Aorta (tissue), 5 donors: ENCODE measurements at regions of chr16 and their contacts with region 1.

Region 1: DNA sequence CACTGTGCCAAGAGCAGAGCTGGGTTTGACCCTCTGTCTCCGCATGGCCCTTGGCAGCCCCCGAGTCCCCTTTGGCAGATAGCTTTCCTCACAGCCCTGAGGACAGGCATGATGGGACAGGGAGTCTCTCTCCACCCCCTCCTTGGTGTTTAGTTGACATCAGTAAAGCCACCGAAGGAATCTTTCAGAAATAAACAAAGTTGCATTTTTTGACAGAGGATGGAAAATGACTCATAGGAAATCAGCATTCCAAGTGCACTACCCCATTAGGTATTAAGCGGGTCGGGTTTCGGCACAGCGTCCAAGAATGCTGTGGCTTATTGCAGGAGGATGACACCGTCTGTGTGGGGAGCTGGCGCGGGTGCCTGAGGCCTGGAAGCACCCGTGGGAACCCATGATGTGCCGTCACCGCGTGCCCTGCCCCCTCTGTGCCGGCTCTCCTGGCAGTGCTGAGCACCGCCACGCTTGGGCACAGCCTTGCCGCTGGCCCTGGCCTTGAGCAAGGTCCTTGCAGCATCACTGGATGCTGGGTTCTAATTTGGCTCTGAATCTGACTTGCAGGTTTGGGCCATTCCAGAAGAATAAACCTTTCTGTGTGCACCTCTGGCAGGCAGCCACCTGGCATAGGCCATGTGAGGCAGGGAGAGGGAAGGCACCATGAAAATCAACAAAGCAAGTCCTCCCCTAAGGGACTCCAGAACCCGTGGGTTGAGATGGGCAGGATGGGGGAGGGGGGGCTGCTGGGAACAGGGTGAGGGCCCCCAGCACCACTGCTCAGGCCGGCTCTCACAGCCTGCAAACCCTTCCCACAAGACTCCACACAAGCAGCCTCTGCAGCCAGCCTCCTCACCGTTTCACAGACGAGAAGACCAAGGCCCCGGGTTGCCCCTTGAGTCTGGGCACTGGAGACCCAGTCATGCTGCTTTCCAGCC is 50.5 kb upstream of the ZNF469 start:
- DNase-seq: peak; percentile 92
- ATAC-seq: peak; percentile 68
- H3K4me3 ChIP-seq: no peak overlapping the region
- H3K27ac ChIP-seq: no peak overlapping the region
- H3K4me1 ChIP-seq: no peaks in the 10 kb centered on the region
- H3K27me3 ChIP-seq: no peaks in the 10 kb centered on the region

Region 2: DNA sequence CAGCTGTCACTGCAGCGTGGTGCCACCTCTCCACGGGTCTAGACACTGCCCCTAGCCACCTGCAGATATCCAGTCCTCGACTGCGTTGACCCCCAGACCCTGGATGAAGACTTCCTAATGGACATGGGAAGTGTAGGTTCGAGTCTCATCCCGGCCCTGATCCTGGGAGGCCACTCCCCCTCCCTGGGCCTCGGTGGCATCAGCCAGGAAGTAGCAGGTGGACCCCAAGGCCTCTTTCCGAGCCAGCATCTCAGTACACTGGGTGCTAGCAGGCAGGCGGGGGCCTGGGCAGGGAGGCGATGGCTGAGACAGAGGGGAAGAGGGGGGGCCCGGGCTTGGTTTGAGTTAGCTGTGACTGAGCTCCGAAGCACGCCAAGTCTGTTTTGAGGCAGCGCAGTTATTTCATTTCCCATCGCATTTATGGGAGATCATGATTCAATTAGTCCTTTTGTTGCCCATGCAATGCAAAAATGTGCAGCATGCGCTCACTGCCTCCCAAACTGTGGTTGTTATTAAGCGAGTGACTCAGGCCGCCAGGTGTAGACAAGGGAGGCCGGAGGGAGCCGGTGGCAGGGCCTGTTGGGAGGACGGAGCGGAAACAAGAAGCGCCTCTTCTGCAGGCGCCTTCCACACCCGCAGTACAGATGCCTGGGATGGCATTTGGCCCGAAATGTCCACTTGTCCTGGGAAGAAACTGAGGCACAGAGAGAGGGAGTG is 25.2 kb after region 1 on chr16:
- intact Hi-C with region 1: no loop called
- DNase-seq: peak; percentile 24 to 59
- ATAC-seq: no peak
- H3K4me3 ChIP-seq: no peak overlapping the region
- H3K27ac ChIP-seq: no peak overlapping the region
- H3K4me1 ChIP-seq: no peaks in the 10 kb centered on the region
- H3K27me3 ChIP-seq: no peaks in the 10 kb centered on the region

Region 3: GRCh38 chr16:88383401-88384221 is 51.4 kb after region 1 on chr16:
- intact Hi-C with region 1: loop called in 1 of 2 experiments (anchors 5 kb)
- DNase-seq: peak; percentile 62 to 85
- ATAC-seq: no peak
- H3K4me3 ChIP-seq: peak overlapping the region; percentile 23 to 24
- H3K27ac ChIP-seq: no peak overlapping the region
- H3K4me1 ChIP-seq: no peaks in the 10 kb centered on the region
- H3K27me3 ChIP-seq: no peaks in the 10 kb centered on the region